ENCODE measurements at regions of chrX and their contacts with region 1.

Region 1: DNA sequence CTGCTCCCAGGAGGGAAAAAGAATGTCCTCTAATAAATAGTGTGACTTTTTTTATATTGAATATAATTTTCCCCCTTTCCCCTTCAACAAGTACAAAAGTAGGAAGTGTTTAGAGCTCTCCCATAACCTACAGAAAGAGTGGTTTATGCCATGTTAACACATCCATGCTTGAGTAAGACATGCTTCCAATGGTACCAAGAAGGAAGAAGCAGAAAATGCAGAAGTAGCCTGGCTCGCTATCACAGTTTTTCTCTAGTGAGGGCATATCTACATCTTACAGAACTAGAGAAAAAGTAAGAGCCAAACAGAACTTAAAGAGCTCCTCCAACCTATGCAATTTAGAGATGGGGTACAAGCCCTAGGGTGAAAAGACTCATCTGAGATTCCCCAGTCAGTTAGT is 82.5 kb downstream of the ARHGEF9 start:
- DNase-seq: no peak
- ATAC-seq: no peak
- H3K4me3 ChIP-seq: no peak overlapping the region
- H3K4me3 Mint-ChIP-seq: no peak overlapping the region
- H3K27ac ChIP-seq: no peak overlapping the region
- H3K27ac Mint-ChIP-seq: no peak overlapping the region
- H3K4me1 ChIP-seq: peaks cover 3% of the 10 kb centered on the region
- H3K4me1 Mint-ChIP-seq: peaks cover 10 to 12% of the 10 kb centered on the region in 2 donors
- H3K27me3 ChIP-seq: no peaks in the 10 kb centered on the region
- H3K27me3 Mint-ChIP-seq: peaks cover 0 to 6% of the 10 kb centered on the region in 2 donors
- CTCF ChIP-seq: no peak

Region 2: GRCh38 chrX:63350941-63351616 is 351.5 kb before region 1 on chrX and contains the start of gene SPIN4:
- intact Hi-C with region 1: no loop called
- DNase-seq: peak; percentile 71 to 73
- ATAC-seq: peak; percentile 94 to 96 (median 95)
- H3K4me3 ChIP-seq: peak within 1 kb of the TSS; percentile 83
- H3K4me3 Mint-ChIP-seq: peak within 1 kb of the TSS; percentile 90
- H3K27ac ChIP-seq: peak within 1 kb of the TSS; percentile 67
- H3K27ac Mint-ChIP-seq: peak within 1 kb of the TSS; percentile 77 to 89
- H3K4me1 ChIP-seq: peaks cover 4% of the 10 kb centered on the region
- H3K4me1 Mint-ChIP-seq: peaks cover 18 to 23% of the 10 kb centered on the region in 2 donors
- H3K27me3 ChIP-seq: no peaks in the 10 kb centered on the region
- H3K27me3 Mint-ChIP-seq: no peaks in the 10 kb centered on the region
- CTCF ChIP-seq: no peak
- total RNA-seq, gene SPIN4: 9.6 to 12.9 (median 11.0) TPM

Region 3: DNA sequence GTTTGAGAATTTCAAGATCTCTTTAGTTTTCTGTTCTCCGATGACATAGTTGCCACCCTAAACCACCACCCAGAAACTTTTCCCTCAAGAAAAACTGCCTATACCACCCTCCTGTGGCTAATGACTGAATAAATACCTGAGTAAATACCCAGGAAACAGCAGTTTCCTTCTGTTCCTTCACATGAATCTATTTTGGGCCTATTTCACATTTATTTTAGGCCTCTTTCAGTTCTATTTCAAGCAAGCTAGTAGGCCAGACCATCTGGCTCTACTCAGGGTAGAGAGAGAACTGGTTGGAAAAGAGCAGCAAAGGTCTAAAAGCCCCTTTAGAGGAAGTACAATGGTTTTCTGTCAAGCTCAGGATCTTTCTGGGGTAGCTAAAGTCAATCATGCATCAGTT is 59.1 kb after region 1 on chrX:
- intact Hi-C with region 1: loop called (anchors 10 kb)
- DNase-seq: peak in 1 of 2 donors; percentile 52
- ATAC-seq: peak in 2 of 3 donors; percentile 84 to 93
- H3K4me3 ChIP-seq: no peak overlapping the region
- H3K4me3 Mint-ChIP-seq: no peak overlapping the region
- H3K27ac ChIP-seq: peak overlapping the region; percentile 33
- H3K27ac Mint-ChIP-seq: peak overlapping the region; percentile 20 to 80
- H3K4me1 ChIP-seq: no peaks in the 10 kb centered on the region
- H3K4me1 Mint-ChIP-seq: peaks cover 0 to 6% of the 10 kb centered on the region in 2 donors
- H3K27me3 ChIP-seq: no peaks in the 10 kb centered on the region
- H3K27me3 Mint-ChIP-seq: no peaks in the 10 kb centered on the region
- CTCF ChIP-seq: peak; percentile 27

Measured in natural killer cell (primary cell).